AG04450 (cell line): ENCODE measurements at regions of chr11 and their contacts with region 1.

Region 1: GRCh38 chr11:4636962-4637661 is at the start of gene OR51D1:
- DNase-seq: peak; percentile 47
- H3K4me3 ChIP-seq: peak within 1 kb of the TSS; percentile 54
- H3K27ac ChIP-seq: no peak within 1 kb of the TSS
- H3K27me3 ChIP-seq: no peaks in the 10 kb centered on the region
- CTCF ChIP-seq: peak; percentile 95
- polyA plus RNA-seq, gene OR51D1: not detected in 2 replicates

Region 2: DNA sequence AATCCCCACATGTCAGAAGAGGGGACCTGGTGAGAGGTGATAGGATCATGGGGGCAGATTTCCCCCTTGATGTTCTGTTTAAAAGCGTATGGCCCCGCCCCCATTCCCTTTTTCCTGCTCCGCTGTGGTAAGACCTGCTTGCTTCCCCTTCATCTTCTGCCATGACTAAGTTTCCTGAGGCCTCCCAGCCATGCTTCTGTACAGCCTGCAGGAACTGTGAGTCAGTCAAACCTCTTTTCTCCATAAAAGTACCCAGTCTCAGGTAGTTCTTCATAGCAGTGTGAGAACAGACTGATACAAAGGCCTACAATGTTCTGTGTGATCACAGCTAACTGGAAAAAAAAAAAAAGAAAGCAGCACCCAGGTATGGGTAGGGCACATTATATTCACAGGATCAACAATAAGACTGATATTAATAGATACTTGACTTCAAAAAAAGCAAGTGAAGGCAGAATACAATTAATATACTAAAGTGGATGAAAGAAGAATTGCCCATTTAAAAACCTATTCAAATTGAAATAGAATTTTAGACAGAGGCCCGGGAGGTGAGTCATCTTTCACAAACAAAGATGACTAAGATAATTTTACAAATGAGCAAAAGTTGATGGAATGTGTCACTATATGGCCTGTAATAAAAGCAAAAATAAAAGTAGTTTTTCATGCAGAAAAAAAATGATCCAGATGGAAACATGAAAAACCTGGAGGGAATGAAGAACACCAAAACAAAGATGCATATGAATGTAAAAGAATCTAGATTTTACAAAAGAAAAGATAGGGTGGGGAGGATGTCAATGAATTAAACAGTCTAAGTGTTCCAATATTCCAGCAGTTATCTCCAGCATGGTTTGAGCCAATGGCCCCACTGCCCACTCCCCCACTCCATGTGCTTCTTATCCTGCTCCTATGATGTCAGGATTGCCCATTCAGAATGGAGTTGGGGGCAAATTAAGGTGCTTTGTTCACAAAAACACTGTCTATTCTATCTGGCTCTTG is 156.2 kb before region 1 on chr11:
- CTCF ChIA-PET with region 1: no interaction called
- POLR2A ChIA-PET with region 1: no interaction called
- DNase-seq: no peak
- H3K4me3 ChIP-seq: no peak overlapping the region
- H3K27ac ChIP-seq: no peak overlapping the region
- H3K27me3 ChIP-seq: no peaks in the 10 kb centered on the region
- CTCF ChIP-seq: no peak

Region 3: DNA sequence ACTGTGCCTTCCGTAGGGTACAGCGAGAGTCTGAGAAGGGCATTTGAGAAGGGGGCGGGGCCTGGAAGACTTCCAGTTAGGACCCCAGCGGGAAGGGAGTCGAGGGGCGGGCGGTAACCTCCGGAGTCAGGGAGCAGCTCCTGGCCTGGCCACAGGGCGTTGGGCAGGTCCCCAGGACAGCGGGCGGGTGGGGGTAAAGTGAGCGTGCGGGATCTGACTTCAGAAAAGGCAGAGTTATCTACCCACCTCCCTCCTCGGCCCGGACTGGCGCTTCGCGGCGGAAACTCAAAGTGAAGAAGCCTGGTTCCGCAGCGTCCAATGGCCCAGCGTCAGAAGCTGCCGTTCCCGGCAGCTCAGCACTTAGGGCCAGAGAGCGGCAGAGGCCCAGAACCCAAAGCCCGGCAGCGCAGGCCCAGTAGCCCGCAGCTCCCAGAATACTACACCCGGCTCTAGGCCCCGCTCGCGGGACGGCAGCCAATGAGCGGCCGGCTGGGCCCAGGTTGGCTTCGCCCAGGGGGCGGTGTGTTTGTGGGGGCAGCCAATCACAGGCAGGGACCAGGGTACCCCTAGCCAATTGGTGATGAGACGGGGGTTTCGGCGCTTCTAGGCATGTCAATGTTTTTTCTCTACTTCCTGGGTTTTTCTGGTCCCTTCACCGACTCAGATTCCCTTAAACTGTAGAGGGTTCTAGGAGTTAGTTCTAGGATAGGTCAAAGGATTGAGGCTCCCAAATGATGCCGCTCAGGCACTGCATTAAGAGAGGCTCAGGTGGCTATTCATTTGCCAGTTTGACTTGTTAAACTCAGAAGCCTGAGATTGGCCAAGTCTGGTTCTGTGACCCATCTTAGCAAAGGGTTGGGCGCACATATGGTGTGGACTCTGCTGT is 29.1 kb before region 1 on chr11 and contains the start of gene TRIM68:
- CTCF ChIA-PET with region 1: interaction called, 21 read pairs
- POLR2A ChIA-PET with region 1: no interaction called
- DNase-seq: peak; percentile 89
- H3K4me3 ChIP-seq: peak within 1 kb of the TSS; percentile 82
- H3K27ac ChIP-seq: peak within 1 kb of the TSS; percentile 94
- H3K27me3 ChIP-seq: no peaks in the 10 kb centered on the region
- CTCF ChIP-seq: no peak
- polyA plus RNA-seq, gene TRIM68: 6.4 and 6.9 TPM in 2 replicates

Region 4: GRCh38 chr11:4658629-4659445 is 21.7 kb after region 1 on chr11:
- CTCF ChIA-PET with region 1: interaction called, 22 read pairs
- POLR2A ChIA-PET with region 1: no interaction called
- DNase-seq: no peak
- H3K4me3 ChIP-seq: no peak overlapping the region
- H3K27ac ChIP-seq: no peak overlapping the region
- H3K27me3 ChIP-seq: no peaks in the 10 kb centered on the region
- CTCF ChIP-seq: no peak

Region 5: DNA sequence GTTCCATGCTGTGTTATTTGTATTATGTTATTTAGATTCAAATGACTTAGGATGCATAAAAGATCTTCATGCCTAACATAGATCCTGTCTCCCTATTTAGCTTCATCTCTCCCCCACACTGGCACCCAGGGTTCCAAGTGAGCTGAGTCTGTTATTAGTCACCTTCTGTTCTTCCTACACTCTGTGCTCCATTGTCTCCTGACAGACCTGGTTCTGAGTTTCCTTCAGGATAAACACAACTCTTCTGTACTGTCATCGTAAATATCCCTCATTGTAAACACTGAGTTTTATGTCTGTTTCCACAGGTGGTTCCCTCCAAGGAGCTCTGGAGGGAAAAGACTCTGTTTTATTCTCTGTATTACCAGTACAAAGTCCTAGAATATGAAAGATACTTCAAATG is 76.1 kb after region 1 on chr11:
- CTCF ChIA-PET with region 1: interaction called, 11 read pairs
- POLR2A ChIA-PET with region 1: no interaction called
- DNase-seq: no peak
- H3K4me3 ChIP-seq: no peak overlapping the region
- H3K27ac ChIP-seq: no peak overlapping the region
- H3K27me3 ChIP-seq: no peaks in the 10 kb centered on the region
- CTCF ChIP-seq: no peak

Region 6: DNA sequence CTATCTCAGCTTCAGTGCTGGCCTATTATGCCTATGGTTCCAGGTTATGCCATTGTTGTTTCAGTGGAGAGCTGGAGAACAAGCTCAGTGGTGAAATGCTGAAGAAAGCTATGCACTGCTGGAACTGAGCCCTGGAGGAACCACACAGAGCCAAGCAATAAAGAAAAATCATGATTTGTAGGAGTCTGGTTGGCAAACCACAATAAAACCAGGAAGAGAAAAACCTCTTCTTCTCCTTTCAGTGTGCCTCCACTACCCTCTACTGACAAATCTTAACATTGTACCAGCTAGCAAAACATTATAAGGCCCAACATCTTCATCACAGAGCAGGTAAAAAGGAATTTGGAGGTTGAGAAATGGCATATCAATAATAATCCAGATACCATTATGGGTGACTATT is 189.3 kb after region 1 on chr11:
- CTCF ChIA-PET with region 1: interaction called, 134 read pairs
- POLR2A ChIA-PET with region 1: no interaction called
- DNase-seq: no peak
- H3K4me3 ChIP-seq: no peak overlapping the region
- H3K27ac ChIP-seq: no peak overlapping the region
- H3K27me3 ChIP-seq: no peaks in the 10 kb centered on the region
- CTCF ChIP-seq: peak; percentile 66

Region 7: DNA sequence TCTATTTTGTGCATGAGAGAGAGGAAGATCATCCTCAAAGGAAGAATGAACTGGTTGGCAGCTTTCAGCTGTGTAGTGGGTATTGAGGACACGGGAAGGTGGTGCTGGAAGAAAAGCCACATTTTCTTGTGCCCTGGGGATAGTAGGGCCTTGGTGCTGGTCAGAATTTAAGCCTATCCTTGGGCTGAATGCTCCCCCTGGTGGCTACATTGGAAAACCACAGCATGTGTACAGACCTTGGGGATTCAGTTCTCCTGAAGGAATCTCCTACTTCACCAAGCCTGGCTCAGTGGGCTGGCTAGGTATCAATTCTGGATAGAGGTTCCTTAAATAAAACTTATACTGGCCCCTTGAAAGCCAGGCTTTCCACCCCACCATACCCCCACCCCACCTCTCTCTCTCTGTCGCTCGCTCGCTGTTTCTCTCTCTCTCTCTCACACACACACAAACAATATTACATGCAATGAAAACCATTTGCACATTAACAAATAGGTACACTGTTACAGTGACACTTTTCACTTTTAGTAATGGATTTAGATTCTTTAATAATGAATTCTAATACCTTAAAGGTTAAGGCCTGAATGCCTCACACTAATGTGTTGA is 743.7 kb after region 1 on chr11:
- CTCF ChIA-PET with region 1: interaction called, 19 read pairs
- POLR2A ChIA-PET with region 1: no interaction called
- DNase-seq: peak; percentile 55
- H3K4me3 ChIP-seq: no peak overlapping the region
- H3K27ac ChIP-seq: no peak overlapping the region
- H3K27me3 ChIP-seq: no peaks in the 10 kb centered on the region
- CTCF ChIP-seq: peak; percentile 93